Activated T-helper 1 cell treated with anti-CD3 and anti-CD28 coated beads, Interleukin-12 subunit alpha, Interleukin-12 subunit beta, Interleukin-2, Interleukin-4 antibody, amounts not matched to agents 30 ng/mL and 10 ng/mL and 1 ng/mL, durations not matched to agents 14 hours and 24 hours and 36 hours (primary cell): ENCODE measurements at regions of chr17 and their contacts with region 1.

Region 1: DNA sequence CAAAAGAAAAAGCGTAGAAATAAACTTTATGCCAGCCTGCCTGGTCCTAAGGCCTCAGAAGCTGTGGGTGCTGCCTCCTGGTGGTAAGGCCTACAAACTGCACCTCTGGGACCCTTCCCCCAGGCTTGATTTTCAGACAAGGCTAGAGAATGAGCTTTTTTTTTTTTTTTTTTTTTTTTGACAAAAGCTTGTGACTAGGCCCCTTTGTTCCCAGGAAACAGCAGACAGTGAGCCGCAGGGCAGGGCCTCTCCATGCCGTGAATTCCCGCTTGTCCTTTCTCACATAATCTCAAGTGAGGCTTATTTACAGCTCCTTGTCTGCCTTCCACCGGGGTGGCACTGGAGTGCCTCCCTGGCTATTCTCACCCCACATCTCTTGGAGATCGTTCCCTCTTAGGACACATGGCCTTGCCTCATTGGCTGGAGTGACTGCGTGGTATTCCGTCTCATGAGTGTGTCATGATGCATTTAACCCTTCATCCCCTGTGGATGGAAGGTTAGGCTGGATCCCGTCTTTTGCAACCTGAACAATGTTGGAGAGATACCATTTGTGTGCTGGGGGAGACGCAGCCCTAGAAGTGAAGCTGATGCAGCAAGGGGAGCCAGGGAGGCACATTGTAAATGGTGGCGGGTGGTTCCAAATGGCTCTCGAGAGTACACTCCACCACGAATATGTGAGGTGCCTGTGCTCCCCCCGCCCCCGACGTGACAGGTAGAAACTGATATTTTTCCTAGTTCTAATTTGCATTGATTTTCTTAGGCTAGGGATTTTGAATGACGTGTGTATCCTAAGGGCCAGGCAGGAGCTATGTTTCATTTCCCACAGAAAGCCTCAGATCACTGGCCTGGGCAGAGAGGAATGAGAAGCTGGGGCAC is 49.6 kb downstream of the USP22 start:
- DNase-seq: peak; percentile 44
- H3K4me3 Mint-ChIP-seq: no peak overlapping the region
- H3K27ac Mint-ChIP-seq: no peak overlapping the region
- H3K4me1 Mint-ChIP-seq: peaks cover 7% of the 10 kb centered on the region
- H3K27me3 Mint-ChIP-seq: no peaks in the 10 kb centered on the region

Region 2: GRCh38 chr17:20797292-20797691 is 195.9 kb before region 1 on chr17:
- intact Hi-C with region 1: loop called (anchors 1 kb)
- DNase-seq: no peak
- H3K4me3 Mint-ChIP-seq: no peak overlapping the region
- H3K27ac Mint-ChIP-seq: peak overlapping the region; percentile 70
- H3K4me1 Mint-ChIP-seq: peaks cover 11% of the 10 kb centered on the region
- H3K27me3 Mint-ChIP-seq: no peaks in the 10 kb centered on the region

Region 3: DNA sequence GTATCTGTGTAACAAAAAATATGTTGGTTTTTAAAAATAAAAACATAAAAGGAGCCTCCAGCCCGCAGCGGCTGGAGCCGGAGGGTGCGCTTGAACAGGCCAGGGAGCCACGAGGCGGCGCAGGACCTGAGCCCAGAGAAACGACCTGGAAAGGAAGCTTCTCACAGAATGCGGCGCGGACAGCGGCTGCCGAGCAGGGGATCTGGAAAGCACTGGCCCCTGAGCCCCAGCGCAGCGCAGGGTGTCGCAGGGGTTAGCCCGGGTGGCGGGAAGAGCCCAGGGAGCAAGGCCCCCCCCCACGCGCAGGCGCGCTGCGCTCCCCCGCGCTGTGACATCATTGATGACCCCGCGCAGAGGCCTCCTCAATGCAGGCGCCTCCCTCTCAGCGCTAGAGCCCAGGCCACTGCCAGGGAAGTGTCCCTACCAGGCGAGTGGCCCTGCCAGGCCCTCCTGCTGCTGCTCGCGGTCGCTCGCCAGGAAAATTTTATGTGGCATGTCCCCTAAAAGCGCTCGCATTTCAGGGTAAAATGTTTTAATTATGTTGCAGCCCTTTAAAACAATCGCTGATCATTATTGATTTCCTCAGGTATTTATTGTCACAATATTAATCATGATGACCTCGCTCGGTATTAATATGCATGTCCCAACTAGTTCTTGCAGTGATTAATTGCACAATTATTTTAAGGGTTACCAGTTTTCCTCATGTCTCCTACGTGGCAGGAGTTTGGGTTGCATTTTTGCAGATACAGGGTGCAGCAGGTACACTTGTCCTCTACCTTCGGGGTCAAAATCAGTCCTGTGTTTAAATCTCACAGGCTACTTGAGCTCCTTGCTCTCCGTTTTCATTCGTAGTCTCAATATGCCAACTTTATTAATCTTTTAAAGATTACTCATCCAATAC is 84.6 kb before region 1 on chr17:
- intact Hi-C with region 1: loop called (anchors 5 kb)
- DNase-seq: peak; percentile 73
- H3K4me3 Mint-ChIP-seq: peak overlapping the region; percentile 75
- H3K27ac Mint-ChIP-seq: peak overlapping the region; percentile 27
- H3K4me1 Mint-ChIP-seq: peaks cover 6% of the 10 kb centered on the region
- H3K27me3 Mint-ChIP-seq: peaks cover 14% of the 10 kb centered on the region

Region 4: GRCh38 chr17:20944014-20944865 is 49.0 kb before region 1 on chr17:
- intact Hi-C with region 1: loop called (anchors 2 kb)
- DNase-seq: no peak
- H3K4me3 Mint-ChIP-seq: no peak overlapping the region
- H3K27ac Mint-ChIP-seq: no peak overlapping the region
- H3K4me1 Mint-ChIP-seq: no peaks in the 10 kb centered on the region
- H3K27me3 Mint-ChIP-seq: peaks cover 4% of the 10 kb centered on the region

Region 5: GRCh38 chr17:21007646-21008045 is 14.4 kb after region 1 on chr17:
- intact Hi-C with region 1: no loop called
- DNase-seq: no peak
- H3K4me3 Mint-ChIP-seq: no peak overlapping the region
- H3K27ac Mint-ChIP-seq: no peak overlapping the region
- H3K4me1 Mint-ChIP-seq: no peaks in the 10 kb centered on the region
- H3K27me3 Mint-ChIP-seq: no peaks in the 10 kb centered on the region